ENCODE measurements at regions of chr13 and their contacts with region 1.

Region 1: DNA sequence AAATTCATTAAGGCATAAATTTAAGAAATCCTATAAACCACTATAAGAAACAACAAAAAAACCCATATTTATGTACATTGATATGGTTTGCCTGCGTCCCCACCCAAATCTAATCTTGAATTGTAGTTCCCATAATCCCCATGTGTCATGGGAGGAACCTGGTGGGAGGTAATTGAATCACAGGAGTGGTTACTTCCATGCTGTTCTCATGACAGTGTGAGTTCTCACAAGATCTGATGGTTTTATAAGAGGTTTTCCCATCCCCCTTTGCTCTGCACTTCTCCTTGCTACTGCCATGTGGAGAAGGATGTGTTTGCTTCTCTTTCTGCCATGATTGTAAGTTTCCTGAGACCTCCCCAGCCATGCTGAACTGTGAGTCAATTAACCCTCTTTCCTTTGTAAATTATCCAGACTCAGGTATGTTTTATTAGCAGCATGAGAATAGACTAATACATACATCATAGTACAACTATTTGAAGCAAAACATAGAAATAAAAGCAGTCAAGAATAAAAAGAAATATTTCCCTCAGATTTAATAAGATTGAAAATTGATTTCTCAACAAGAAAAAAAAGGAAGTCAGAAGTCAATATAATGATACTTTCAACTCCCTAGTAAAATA is 209.0 kb upstream of the GPC6 start:
- DNase-seq: no peak
- H3K4me3 ChIP-seq: no peak overlapping the region
- H3K4me3 Mint-ChIP-seq: no peak overlapping the region
- H3K27ac Mint-ChIP-seq: no peak overlapping the region
- H3K4me1 ChIP-seq: no peaks in the 10 kb centered on the region
- H3K4me1 Mint-ChIP-seq: no peaks in the 10 kb centered on the region
- H3K27me3 ChIP-seq: no peaks in the 10 kb centered on the region
- H3K27me3 Mint-ChIP-seq: peaks cover 5% of the 10 kb centered on the region
- CTCF ChIP-seq: no peak

Region 2: GRCh38 chr13:93227878-93228642 is 210.5 kb after region 1 on chr13:
- CTCF ChIA-PET with region 1: no interaction called
- POLR2A ChIA-PET with region 1: no interaction called
- intact Hi-C with region 1: no loop called
- DNase-seq: no peak
- H3K4me3 ChIP-seq: no peak overlapping the region
- H3K4me3 Mint-ChIP-seq: no peak overlapping the region
- H3K27ac Mint-ChIP-seq: peak overlapping the region; percentile 48
- H3K4me1 ChIP-seq: peaks cover 56% of the 10 kb centered on the region
- H3K4me1 Mint-ChIP-seq: peaks cover 38% of the 10 kb centered on the region
- H3K27me3 ChIP-seq: no peaks in the 10 kb centered on the region
- H3K27me3 Mint-ChIP-seq: no peaks in the 10 kb centered on the region
- CTCF ChIP-seq: no peak

Region 3: DNA sequence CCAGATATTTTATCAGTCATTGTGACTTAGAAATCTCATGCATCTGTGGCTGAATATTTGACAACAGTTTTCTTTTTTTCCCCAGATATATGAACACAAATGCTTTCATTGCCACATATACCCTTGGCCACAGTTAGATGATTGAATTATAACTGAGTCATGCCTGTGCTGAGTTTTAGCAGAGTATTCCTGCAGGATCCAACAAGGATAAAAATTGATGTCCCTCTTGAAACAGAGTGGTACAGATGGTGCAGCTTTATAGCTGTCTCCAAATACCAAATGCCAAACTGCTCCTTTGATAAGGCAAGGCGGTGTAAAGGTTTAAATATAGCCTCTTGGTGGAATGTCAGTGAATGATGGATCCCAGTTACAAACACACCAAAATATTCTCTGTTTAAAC is 637.6 kb after region 1 on chr13:
- CTCF ChIA-PET with region 1: no interaction called
- POLR2A ChIA-PET with region 1: no interaction called
- intact Hi-C with region 1: loop called (anchors 10 kb)
- DNase-seq: no peak
- H3K4me3 ChIP-seq: no peak overlapping the region
- H3K4me3 Mint-ChIP-seq: no peak overlapping the region
- H3K27ac Mint-ChIP-seq: no peak overlapping the region
- H3K4me1 ChIP-seq: no peaks in the 10 kb centered on the region
- H3K4me1 Mint-ChIP-seq: no peaks in the 10 kb centered on the region
- H3K27me3 ChIP-seq: no peaks in the 10 kb centered on the region
- H3K27me3 Mint-ChIP-seq: no peaks in the 10 kb centered on the region
- CTCF ChIP-seq: no peak